ENCODE measurements at regions of chr15 and their contacts with region 1.

Region 1: DNA sequence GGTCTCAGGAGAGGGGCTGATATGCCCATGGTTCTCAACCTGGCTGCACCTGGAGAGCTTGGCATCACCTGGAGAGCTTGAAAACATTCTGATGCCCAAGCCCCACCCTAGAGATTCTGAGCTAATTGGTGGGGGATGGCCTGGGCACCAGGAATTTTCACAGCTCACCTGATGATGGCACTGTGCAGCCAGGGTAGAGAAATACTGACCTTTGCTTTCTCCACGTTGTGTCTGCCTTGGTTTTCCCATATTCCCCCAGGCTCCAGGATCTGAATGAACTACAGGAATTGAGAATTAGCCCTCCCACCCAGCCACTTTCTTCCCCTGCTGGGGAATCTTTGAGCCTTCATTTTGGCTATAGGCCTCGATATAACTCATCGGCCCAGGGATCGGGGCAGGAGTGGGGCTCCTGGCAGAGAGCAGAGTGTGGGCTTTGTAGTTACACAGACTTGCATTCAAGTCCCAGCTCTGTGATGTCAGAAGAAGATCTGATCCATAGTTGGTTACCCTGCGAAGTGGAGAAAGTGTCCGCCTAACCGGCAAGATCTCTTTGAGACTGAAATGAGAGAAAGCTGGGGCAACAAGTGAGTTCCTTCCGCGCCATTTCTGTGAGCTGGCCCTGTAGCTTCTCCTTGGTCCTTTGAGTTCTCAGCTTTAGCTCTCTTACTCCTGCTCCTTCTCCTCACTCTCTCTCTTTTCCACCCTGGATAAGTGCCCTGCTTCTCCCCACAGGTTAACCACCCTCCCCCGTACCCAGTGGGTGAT is 33.1 kb upstream of the UBE2Q2 start:
- DNase-seq: peak in 3 of 5 donors; percentile 4 to 8 (median 6)
- H3K4me3 ChIP-seq: no peak overlapping the region
- H3K4me3 Mint-ChIP-seq: no peak overlapping the region
- H3K27ac ChIP-seq: no peak overlapping the region
- H3K27ac Mint-ChIP-seq: no peak overlapping the region
- H3K4me1 ChIP-seq: no peaks in the 10 kb centered on the region
- H3K4me1 Mint-ChIP-seq: no peaks in the 10 kb centered on the region
- H3K27me3 ChIP-seq: no peaks in the 10 kb centered on the region
- H3K27me3 Mint-ChIP-seq: peaks cover 0 to 6% of the 10 kb centered on the region in 2 donors

Region 2: DNA sequence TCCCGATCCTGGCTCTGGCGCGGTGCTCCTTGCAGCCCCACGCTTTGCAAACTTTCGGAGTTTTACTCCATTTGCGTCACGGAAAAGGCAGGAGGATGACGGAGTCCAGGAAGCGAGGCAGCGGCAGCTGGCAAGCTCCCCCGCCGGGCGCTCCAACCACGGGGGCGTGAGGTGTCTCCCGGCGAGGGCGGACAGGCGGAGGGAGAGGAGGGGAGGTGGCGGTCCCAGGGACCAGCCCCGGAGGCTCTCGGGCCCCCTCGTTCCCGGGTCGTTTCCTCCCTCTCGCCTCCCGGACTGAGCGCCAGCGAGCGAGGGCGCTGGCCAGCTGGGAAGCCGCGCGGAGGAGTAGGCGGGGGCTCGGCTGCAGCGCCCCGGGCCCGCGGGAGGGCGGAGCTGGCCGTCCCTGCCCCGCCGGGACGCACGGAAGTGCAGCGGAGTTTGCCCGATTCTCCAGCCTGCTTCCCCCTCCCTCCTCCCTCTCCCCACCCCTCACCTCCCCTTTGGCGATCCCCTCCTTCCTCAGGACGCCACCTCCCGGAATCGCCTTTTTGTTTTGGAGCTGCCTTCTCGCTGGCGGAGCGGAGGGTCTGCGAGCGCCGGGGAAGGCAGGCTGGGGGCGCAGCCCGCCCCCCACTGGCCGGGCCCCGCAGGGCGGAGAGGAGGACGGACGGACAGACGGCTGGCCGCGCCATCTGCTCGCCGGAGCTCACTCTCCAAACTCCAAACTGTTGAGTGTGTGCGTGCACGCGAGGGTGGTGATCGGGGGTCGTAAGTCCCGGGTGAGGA is 162.6 kb before region 1 on chr15 and contains the start of gene SNX33:
- CTCF ChIA-PET with region 1: no interaction called
- POLR2A ChIA-PET with region 1: no interaction called
- intact Hi-C with region 1: no loop called
- DNase-seq: peak; percentile 43 to 82 (median 49)
- H3K4me3 ChIP-seq: peak within 1 kb of the TSS; percentile 64 to 73
- H3K4me3 Mint-ChIP-seq: peak within 1 kb of the TSS; percentile 86 to 91 (median 89)
- H3K27ac ChIP-seq: peak within 1 kb of the TSS; percentile 45
- H3K27ac Mint-ChIP-seq: peak within 1 kb of the TSS; percentile 66 to 91 (median 86)
- H3K4me1 ChIP-seq: peaks cover 32% of the 10 kb centered on the region
- H3K4me1 Mint-ChIP-seq: peaks cover 20 to 53% (median 37%) of the 10 kb centered on the region in 4 donors
- H3K27me3 ChIP-seq: no peaks in the 10 kb centered on the region
- H3K27me3 Mint-ChIP-seq: no peaks in the 10 kb centered on the region
- total RNA-seq, gene SNX33: 3.5 to 3.8 TPM

Region 3: DNA sequence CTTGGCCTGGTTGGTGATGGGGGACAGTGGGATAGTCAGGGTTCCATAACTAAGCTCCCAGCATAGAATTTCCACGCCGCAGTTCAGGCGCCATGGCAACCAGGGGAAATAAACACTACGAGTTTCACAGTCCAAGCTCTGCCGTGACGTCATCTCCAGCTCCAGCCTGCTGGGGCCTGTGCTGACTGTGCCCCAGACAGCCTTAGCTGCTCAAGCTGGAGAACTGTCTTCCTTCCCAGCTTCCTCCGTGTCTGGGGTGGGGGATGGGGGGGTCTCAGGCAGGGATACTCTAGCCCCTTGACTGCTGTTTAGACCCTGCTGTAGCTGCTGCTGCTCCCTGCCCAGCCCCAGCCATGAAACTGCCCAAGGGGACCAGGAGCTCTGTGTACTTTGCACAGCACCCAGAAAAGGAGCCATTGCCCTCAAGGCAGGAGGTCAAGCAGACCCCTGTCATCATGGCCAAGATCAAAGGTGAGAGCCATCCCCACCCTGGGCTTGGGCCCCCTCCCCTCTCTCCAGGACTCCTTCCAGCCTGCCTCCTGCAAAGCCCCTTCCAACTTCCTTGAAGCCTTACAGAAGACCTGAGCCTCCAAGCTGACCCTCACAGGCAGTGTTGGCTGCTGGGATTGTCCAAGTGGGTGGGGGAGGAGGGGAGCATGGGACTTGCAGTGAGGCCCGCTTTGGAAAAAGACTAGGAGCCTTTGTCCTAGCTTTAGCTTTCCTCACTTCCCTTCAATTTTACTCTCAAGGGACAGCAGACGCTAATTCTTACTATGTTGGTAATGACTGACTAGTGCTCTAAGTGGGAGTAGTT is 86.1 kb before region 1 on chr15:
- CTCF ChIA-PET with region 1: interaction called, 11 read pairs
- POLR2A ChIA-PET with region 1: no interaction called
- intact Hi-C with region 1: no loop called
- DNase-seq: peak; percentile 16 to 69 (median 25)
- H3K4me3 ChIP-seq: no peak overlapping the region
- H3K4me3 Mint-ChIP-seq: no peak overlapping the region
- H3K27ac ChIP-seq: no peak overlapping the region
- H3K27ac Mint-ChIP-seq: peak overlapping the region in 4 of 7 donors; percentile 16 to 83 (median 56)
- H3K4me1 ChIP-seq: no peaks in the 10 kb centered on the region
- H3K4me1 Mint-ChIP-seq: peaks cover 0 to 10% (median 1%) of the 10 kb centered on the region in 4 donors
- H3K27me3 ChIP-seq: no peaks in the 10 kb centered on the region
- H3K27me3 Mint-ChIP-seq: peaks cover 0 to 9% of the 10 kb centered on the region in 2 donors

Region 4: GRCh38 chr15:75842722-75843551 is 32.8 kb after region 1 on chr15 and contains the start of gene UBE2Q2:
- CTCF ChIA-PET with region 1: interaction called, 4 read pairs
- POLR2A ChIA-PET with region 1: interaction called, 3 read pairs
- intact Hi-C with region 1: loop called (anchors 2 kb)
- DNase-seq: peak; percentile 69 to 78 (median 71)
- H3K4me3 ChIP-seq: peak within 1 kb of the TSS; percentile 57 to 71
- H3K4me3 Mint-ChIP-seq: peak within 1 kb of the TSS; percentile 92 to 99 (median 96)
- H3K27ac ChIP-seq: peak within 1 kb of the TSS; percentile 67
- H3K27ac Mint-ChIP-seq: peak within 1 kb of the TSS; percentile 91 to 98 (median 96)
- H3K4me1 ChIP-seq: peaks cover 40% of the 10 kb centered on the region
- H3K4me1 Mint-ChIP-seq: peaks cover 32 to 53% (median 47%) of the 10 kb centered on the region in 4 donors
- H3K27me3 ChIP-seq: no peaks in the 10 kb centered on the region
- H3K27me3 Mint-ChIP-seq: no peaks in the 10 kb centered on the region
- total RNA-seq, gene UBE2Q2: 38.0 to 42.9 TPM

Region 5: DNA sequence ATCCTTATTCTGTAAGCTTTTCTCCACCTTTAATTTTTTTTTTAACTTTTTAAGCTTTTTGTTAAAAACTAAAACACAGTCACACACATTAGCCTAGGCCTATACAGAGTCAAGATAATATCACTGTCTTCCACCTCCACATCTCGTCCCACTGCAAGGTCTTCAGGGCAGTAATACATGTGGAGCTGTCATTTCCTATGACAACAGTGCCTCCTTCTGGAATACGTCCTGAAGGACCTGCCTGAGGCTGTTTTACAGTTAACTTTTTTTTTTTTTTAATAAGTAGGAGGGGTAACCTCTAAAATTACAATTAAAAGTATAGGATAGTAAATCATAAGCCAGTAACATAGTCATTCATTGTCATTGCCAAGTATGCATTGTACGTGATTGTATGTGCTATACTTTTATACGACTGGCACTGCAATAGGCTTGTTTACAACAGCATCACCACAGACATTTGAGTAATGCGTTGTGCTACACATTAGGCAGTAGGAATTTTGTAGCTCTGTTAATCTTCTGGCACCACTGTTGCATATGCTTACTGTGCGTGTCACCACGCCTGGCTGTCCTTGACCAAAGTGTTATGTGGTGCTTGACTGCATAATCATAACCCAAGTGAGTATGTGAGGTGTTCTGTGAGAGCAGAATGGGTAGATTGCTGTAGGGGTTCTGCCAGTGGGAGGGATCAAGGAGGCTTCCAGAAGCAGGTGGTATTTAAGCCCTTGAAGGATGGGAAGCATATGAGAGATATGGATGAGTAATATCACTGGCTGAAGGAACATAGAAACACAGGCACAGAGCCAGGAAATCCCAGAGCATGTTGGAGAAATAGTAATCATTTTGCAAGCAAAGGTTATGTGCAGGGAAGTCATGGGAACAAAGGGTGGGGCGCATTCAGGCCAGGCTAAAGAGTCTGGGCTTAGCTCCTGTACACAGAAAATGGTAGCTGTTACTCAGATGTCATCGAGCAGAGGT is 111.8 kb after region 1 on chr15:
- CTCF ChIA-PET with region 1: interaction called, 19 read pairs
- POLR2A ChIA-PET with region 1: no interaction called
- intact Hi-C with region 1: no loop called
- DNase-seq: peak in 4 of 5 donors; percentile 12 to 32 (median 23)
- H3K4me3 ChIP-seq: no peak overlapping the region
- H3K4me3 Mint-ChIP-seq: no peak overlapping the region
- H3K27ac ChIP-seq: no peak overlapping the region
- H3K27ac Mint-ChIP-seq: no peak overlapping the region
- H3K4me1 ChIP-seq: no peaks in the 10 kb centered on the region
- H3K4me1 Mint-ChIP-seq: peaks cover 15 to 32% (median 19%) of the 10 kb centered on the region in 4 donors
- H3K27me3 ChIP-seq: no peaks in the 10 kb centered on the region
- H3K27me3 Mint-ChIP-seq: no peaks in the 10 kb centered on the region

Region 6: GRCh38 chr15:76057332-76058000 is 247.3 kb after region 1 on chr15:
- CTCF ChIA-PET with region 1: interaction called, 10 read pairs
- POLR2A ChIA-PET with region 1: no interaction called
- intact Hi-C with region 1: no loop called
- DNase-seq: peak in 4 of 5 donors; percentile 33 to 41 (median 34)
- H3K4me3 ChIP-seq: no peak overlapping the region
- H3K4me3 Mint-ChIP-seq: peak overlapping the region in 6 of 8 donors; percentile 32 to 59 (median 48)
- H3K27ac ChIP-seq: no peak overlapping the region
- H3K27ac Mint-ChIP-seq: no peak overlapping the region
- H3K4me1 ChIP-seq: peaks cover 24% of the 10 kb centered on the region
- H3K4me1 Mint-ChIP-seq: peaks cover 5 to 27% (median 16%) of the 10 kb centered on the region in 4 donors
- H3K27me3 ChIP-seq: peaks cover 29% of the 10 kb centered on the region
- H3K27me3 Mint-ChIP-seq: peaks cover 37 to 47% of the 10 kb centered on the region in 2 donors